ENCODE measurements at regions of chr1 and their contacts with region 1.

Region 1: DNA sequence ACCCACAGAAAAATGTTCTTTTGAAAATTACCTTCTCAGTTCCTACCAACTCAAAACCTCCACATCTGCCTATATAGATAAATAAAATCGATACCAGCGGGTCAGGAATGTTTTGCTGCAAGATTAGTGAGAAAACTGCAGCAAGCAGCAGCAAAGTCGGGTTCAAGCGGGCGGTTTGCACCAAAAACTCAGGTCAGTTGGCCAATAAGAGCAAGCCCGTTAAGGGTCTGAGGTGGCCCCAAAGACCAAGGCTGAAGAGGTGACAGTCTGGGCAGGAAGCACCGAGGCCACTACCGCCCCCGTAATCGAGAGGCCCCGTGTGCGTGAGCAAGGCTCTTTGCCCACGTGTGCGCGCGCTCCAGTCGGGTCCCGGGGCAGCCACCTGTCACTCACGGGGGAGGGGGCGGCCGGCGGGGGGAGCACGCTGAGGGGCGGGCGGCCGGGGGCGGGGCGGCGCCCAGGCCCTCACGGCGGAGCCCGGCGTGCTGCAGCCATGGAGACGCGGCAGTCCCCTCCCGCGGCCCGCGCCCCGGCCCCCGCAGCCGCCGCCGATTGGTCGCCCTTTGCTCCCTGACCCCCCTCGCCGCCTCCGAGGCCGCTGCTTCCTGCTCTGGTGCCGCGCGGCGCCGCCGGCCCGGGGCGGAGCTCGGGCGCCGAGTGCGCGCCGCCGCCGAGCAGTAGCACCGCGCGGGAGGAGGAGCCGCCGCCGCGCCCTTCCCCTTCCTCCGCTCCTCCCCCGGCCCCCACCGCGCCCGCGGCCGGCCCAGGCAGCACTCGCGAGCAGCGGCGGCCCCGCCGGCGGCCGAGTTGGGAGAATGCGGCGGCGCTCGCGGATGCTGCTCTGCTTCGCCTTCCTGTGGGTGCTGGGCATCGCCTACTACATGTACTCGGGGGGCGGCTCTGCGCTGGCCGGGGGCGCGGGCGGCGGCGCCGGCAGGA is at the start of gene GALNT2:
- H3K4me3 Mint-ChIP-seq: peak within 1 kb of the TSS; percentile 88
- H3K27ac Mint-ChIP-seq: peak within 1 kb of the TSS; percentile 91
- H3K4me1 Mint-ChIP-seq: peaks cover 51% of the 10 kb centered on the region
- H3K27me3 Mint-ChIP-seq: peaks cover 3% of the 10 kb centered on the region

Region 2: DNA sequence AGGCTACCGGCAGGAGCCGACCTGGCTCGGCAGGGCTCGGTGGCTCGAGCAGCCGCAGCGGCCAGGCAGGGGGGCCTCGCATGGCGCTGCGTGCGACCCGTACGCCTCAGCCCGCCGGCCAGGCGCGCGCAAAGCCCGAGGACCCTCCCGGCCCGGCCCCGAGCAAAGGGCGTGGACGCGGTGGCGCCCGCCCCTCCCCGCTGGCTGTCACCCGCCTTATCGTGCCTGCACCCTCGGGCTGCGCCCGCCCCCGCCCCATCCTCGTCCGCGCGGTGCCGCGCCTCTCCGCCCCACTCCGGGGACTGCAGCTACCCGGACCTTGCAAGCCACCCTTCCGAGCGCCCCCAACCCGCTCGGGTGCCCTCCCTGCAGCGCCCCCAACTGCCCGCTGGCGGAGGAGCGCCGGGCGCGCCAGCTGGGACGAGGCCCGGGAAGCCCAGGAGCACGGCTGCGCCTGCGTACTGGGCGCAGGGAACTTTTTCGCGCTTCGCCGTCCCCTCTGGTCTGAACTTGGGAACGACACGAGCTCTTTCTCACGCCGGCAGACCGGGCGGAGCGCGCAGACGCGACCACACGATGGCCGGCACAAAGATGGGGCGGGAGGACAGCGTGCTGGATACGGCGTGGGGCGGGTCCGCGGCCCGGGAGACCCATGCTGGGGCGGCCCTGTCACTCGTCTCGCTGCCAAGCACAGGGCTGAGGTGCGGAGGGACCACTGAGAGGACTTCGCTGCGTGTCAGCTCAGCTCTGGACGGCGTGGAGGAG is 508.0 kb before region 1 on chr1 and contains the start of gene ABCB10:
- intact Hi-C with region 1: loop called (anchors 5 kb)
- H3K4me3 Mint-ChIP-seq: peak within 1 kb of the TSS; percentile 95
- H3K27ac Mint-ChIP-seq: peak within 1 kb of the TSS; percentile 86
- H3K4me1 Mint-ChIP-seq: peaks cover 46% of the 10 kb centered on the region
- H3K27me3 Mint-ChIP-seq: no peaks in the 10 kb centered on the region

Region 3: DNA sequence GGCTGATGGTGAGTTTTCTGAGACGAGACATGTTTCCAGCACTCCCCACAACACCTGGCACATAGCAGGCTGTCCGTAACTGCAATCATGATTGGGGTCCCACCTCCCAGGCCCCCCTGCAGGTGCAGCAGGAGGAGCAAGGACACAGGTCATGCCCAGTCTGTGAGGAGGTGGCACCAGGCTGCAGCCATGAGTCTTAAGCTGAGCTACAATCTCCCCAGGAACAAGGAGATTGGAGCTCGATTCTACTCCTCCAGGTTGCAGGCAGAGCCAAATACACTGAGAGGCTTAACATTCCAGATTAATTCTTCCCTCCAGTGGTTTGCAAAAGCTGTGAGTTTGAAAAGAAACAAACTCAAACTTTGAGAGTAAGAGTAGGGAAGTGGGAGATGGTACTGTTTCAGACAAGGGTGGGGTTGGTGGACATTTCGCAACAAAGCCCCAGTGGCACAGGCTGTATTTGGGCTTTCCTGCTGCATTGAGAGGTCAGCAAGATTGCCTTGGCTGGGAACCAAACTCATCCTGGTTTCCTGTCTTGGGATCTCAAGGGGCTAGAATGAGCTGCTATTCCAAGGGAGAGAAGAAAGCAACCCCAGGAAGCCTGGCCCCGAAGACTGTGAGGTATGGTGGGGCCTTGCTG is 64.5 kb before region 1 on chr1:
- intact Hi-C with region 1: loop called (anchors 5 kb)
- H3K4me3 Mint-ChIP-seq: no peak overlapping the region
- H3K27ac Mint-ChIP-seq: no peak overlapping the region
- H3K4me1 Mint-ChIP-seq: peaks cover 52% of the 10 kb centered on the region
- H3K27me3 Mint-ChIP-seq: no peaks in the 10 kb centered on the region

Region 4: GRCh38 chr1:230037261-230037660 is 29.5 kb before region 1 on chr1:
- intact Hi-C with region 1: no loop called
- H3K4me3 Mint-ChIP-seq: no peak overlapping the region
- H3K27ac Mint-ChIP-seq: no peak overlapping the region
- H3K4me1 Mint-ChIP-seq: peaks cover 2% of the 10 kb centered on the region
- H3K27me3 Mint-ChIP-seq: no peaks in the 10 kb centered on the region

Region 5: DNA sequence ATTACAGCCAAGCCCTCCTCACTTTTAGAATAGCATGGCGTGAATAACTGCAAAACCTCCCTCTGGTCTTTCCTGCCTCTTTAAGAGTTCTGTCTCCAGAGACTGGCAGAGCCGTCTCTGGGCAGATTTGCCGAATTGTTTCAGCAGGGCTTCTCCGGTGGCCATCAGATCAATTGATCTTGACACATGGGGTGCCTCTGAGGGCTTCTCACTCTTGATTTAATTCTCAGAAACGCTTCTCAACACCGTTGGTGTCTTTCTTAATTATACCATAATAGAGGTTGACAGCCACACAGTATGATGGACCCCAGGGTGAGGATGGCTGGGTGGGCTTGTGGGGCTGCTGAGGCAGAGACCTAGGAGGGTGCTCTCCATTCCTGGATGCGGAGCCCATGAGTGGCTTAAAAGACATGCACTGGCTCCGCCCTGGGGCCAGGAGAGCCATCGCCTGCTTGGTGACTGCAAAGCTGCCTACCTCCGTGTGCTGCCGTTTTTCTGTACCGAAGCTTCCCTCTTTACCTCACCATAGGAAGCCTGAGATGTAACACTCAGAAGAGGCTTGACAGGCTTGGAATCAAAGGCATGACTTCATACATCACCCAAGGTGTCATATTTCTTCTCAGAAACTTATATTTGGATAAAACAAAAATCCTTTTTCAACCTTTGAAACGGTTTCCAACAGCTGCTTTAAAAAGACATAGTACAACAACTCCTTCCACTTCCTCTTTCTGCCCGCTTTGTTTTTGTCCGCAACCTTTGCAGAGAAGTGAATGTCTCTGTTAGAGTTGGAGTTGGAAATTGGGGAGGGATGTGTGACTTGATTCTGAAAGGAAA is 83.2 kb after region 1 on chr1:
- intact Hi-C with region 1: loop called (anchors 5 kb)
- H3K4me3 Mint-ChIP-seq: peak overlapping the region; percentile 51
- H3K27ac Mint-ChIP-seq: peak overlapping the region; percentile 37
- H3K4me1 Mint-ChIP-seq: peaks cover 85% of the 10 kb centered on the region
- H3K27me3 Mint-ChIP-seq: no peaks in the 10 kb centered on the region

Region 6: GRCh38 chr1:230292689-230293389 is 226.1 kb after region 1 on chr1:
- intact Hi-C with region 1: no loop called
- H3K4me3 Mint-ChIP-seq: no peak overlapping the region
- H3K27ac Mint-ChIP-seq: peak overlapping the region; percentile 29
- H3K4me1 Mint-ChIP-seq: no peaks in the 10 kb centered on the region
- H3K27me3 Mint-ChIP-seq: peaks cover 30% of the 10 kb centered on the region